ENCODE measurements at regions of chr15 and their contacts with region 1.

Region 1: GRCh38 chr15:34927726-34928125 is 41.8 kb downstream of the AQR start:
- DNase-seq: no peak
- ATAC-seq: no peak
- H3K4me3 ChIP-seq: no peak overlapping the region
- H3K4me3 Mint-ChIP-seq: no peak overlapping the region
- H3K27ac ChIP-seq: no peak overlapping the region
- H3K27ac Mint-ChIP-seq: no peak overlapping the region
- H3K4me1 ChIP-seq: no peaks in the 10 kb centered on the region
- H3K4me1 Mint-ChIP-seq: peaks cover 0 to 10% (median 0%) of the 10 kb centered on the region in 7 donors
- H3K27me3 ChIP-seq: no peaks in the 10 kb centered on the region
- H3K27me3 Mint-ChIP-seq: no peaks in the 10 kb centered on the region

Region 2: DNA sequence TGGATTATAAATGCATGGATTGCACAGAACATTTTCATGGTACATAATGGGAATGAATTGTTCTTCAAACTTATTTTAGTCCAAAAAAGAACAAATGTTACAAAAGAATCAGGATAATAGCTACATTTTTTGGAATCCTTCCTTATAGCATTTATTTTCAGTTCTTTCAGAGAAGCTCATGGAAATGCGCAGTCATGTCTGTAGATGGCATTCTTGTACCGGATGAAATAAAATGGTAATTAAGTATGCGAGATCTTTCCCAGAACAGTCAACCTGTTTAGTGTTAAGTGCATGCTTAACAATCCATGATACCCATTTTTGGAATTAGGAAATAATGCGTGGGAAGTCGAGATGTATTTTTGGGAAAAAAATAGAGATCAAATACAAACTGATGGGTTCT is 306.1 kb before region 1 on chr15:
- CTCF ChIA-PET with region 1: no interaction called
- POLR2A ChIA-PET with region 1: no interaction called
- intact Hi-C with region 1: loop called in 1 of 2 experiments (anchors 5 kb)
- DNase-seq: no peak
- ATAC-seq: no peak
- H3K4me3 ChIP-seq: no peak overlapping the region
- H3K4me3 Mint-ChIP-seq: no peak overlapping the region
- H3K27ac ChIP-seq: no peak overlapping the region
- H3K27ac Mint-ChIP-seq: no peak overlapping the region
- H3K4me1 ChIP-seq: no peaks in the 10 kb centered on the region
- H3K4me1 Mint-ChIP-seq: peaks cover 0 to 3% (median 0%) of the 10 kb centered on the region in 7 donors
- H3K27me3 ChIP-seq: peaks cover 0 to 8% of the 10 kb centered on the region in 2 donors
- H3K27me3 Mint-ChIP-seq: peaks cover 31 to 56% (median 53%) of the 10 kb centered on the region in 5 donors

Region 3: DNA sequence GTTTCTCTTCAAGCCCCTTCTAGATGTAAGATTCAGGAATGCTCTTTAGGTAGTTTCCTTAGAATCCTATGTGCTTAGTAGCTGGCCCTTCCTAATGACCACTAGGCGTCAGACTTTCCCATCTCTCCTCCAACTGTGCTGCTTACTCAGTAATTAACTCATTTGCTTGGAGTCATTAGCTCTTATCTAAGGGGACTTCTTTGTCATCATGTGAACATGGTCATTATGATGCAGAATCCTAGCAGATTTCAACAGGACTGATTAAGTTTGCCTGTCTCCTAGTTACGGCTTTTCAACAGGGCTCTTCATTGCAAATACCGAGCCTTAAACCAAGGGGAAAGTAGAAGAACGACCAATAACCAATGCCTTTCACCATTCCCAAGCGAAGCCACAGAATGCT is 219.3 kb before region 1 on chr15:
- CTCF ChIA-PET with region 1: no interaction called
- POLR2A ChIA-PET with region 1: no interaction called
- intact Hi-C with region 1: loop called in 1 of 2 experiments (anchors 10 kb)
- DNase-seq: no peak
- ATAC-seq: no peak
- H3K4me3 ChIP-seq: no peak overlapping the region
- H3K4me3 Mint-ChIP-seq: no peak overlapping the region
- H3K27ac ChIP-seq: no peak overlapping the region
- H3K27ac Mint-ChIP-seq: no peak overlapping the region
- H3K4me1 ChIP-seq: no peaks in the 10 kb centered on the region
- H3K4me1 Mint-ChIP-seq: no peaks in the 10 kb centered on the region
- H3K27me3 ChIP-seq: no peaks in the 10 kb centered on the region
- H3K27me3 Mint-ChIP-seq: peaks cover 30 to 52% (median 49%) of the 10 kb centered on the region in 5 donors

Measured in naive thymus-derived CD4-positive, alpha-beta T cell (primary cell).